IMR-90 (cell line): ENCODE measurements at regions of chr11 and their contacts with region 1.

Region 1: GRCh38 chr11:6603287-6604080 is at the starts of genes ILK and RRP8:
- DNase-seq: peak; percentile 86
- ATAC-seq: peak; percentile 80
- H3K4me3 ChIP-seq: peak within 1 kb of the TSS; percentile 90
- H3K27ac ChIP-seq: peak within 1 kb of the TSS; percentile 95
- H3K4me1 ChIP-seq: peaks cover 20% of the 10 kb centered on the region
- H3K27me3 ChIP-seq: no peaks in the 10 kb centered on the region
- CTCF ChIP-seq: peak; percentile 27
- POLR2A ChIP-seq: peak; percentile 30; the same call in 1 of the 2 replicates
- RAD21 ChIP-seq: peak; percentile 26
- total RNA-seq, gene ILK: 272 and 339 TPM in 2 replicates
- total RNA-seq, gene RRP8: 11.1 and 11.5 TPM in 2 replicates

Region 2: DNA sequence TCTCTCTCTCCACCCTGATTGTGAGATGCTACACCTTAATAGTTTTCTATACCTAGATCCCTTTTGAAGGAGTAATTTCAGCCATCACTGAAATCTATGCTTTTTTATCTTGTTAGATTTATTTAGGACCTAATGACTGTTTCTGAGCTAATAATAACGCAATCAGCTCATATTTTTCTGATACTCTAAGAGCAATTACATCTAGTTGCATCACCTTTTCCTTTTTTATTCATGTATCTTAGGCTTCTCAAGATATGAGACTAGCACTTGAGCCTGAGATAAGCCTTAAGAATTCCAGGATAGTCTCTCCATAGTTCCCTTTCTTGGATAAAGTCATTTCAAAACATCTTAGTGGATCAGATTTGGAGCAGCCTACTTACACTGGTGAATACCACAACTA is 258.1 kb before region 1 on chr11:
- CTCF ChIA-PET with region 1: no interaction called
- POLR2A ChIA-PET with region 1: no interaction called
- dilution Hi-C with region 1: no loop called
- in situ Hi-C with region 1: no loop called
- intact Hi-C with region 1: no loop called
- DNase-seq: peak; percentile 21
- ATAC-seq: no peak
- H3K4me3 ChIP-seq: no peak overlapping the region
- H3K27ac ChIP-seq: no peak overlapping the region
- H3K4me1 ChIP-seq: no peaks in the 10 kb centered on the region
- H3K27me3 ChIP-seq: no peaks in the 10 kb centered on the region
- CTCF ChIP-seq: no peak
- POLR2A ChIP-seq: no peak
- RAD21 ChIP-seq: no peak

Region 3: DNA sequence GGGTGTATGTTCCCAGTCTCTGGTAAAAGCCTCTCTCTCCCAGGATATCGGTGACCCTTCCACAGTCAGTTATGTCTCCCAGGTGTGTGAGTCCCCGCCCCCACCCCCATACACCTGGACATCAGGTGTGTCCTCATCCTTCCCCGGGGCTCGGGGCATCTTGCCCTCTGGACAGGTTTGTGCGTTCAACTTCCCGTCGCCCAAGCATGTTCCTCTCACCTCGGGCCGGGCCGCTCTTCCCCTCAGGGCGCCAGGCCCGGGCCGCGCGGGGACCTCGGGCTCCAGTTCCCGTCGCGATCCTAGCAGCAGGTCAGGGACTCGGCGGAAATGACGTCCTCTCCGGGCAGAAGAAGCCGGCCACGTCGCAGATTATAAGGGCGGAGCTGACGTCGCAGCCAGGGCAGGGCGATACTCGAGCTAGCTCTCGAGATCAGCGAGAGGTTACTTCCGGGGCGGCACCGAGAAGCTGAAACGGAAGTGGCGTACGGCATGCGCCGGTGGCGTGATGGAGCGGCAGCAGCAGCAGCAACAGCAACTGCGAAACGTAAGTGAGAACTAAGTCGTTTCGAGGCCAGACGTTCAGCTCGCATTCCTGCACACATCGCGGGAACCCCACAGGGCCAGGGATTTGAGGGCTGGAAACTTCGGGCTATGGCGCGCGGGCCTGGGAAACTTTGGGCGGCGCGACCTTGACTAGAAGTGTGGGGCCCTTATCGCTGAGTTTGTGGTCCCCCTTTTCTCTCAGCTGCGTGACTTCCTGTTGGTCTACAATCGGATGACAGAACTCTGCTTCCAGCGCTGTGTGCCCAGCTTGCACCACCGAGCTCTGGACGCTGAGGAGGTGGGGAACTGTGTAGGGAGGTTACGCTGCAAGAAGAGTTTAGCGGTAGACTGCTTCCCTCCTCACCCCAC is 122.2 kb before region 1 on chr11 and contains the starts of genes ARFIP2 and TIMM10B:
- CTCF ChIA-PET with region 1: no interaction called
- POLR2A ChIA-PET with region 1: no interaction called
- dilution Hi-C with region 1: no loop called
- in situ Hi-C with region 1: no loop called
- intact Hi-C with region 1: loop called (anchors 5 kb)
- DNase-seq: peak; percentile 98
- ATAC-seq: peak; percentile 96
- H3K4me3 ChIP-seq: peak within 1 kb of the TSS; percentile 82
- H3K27ac ChIP-seq: peak within 1 kb of the TSS; percentile 84
- H3K4me1 ChIP-seq: peaks cover 8% of the 10 kb centered on the region
- H3K27me3 ChIP-seq: no peaks in the 10 kb centered on the region
- CTCF ChIP-seq: no peak
- POLR2A ChIP-seq: peak; percentile 87; the same call in 1 of the 2 replicates
- RAD21 ChIP-seq: no peak; the same call in 1 of the 2 replicates
- total RNA-seq, gene ARFIP2: 76.7 and 84.4 TPM in 2 replicates
- total RNA-seq, gene TIMM10B: 24.7 and 27.5 TPM in 2 replicates

Region 4: GRCh38 chr11:6586434-6587359 is 16.8 kb before region 1 on chr11:
- CTCF ChIA-PET with region 1: no interaction called
- POLR2A ChIA-PET with region 1: no interaction called
- dilution Hi-C with region 1: no loop called
- in situ Hi-C with region 1: no loop called
- intact Hi-C with region 1: no loop called
- DNase-seq: no peak
- ATAC-seq: no peak
- H3K4me3 ChIP-seq: no peak overlapping the region
- H3K27ac ChIP-seq: no peak overlapping the region
- H3K4me1 ChIP-seq: no peaks in the 10 kb centered on the region
- H3K27me3 ChIP-seq: no peaks in the 10 kb centered on the region
- CTCF ChIP-seq: no peak
- POLR2A ChIP-seq: no peak
- RAD21 ChIP-seq: no peak